Activated CD8-positive, alpha-beta memory T cell treated with anti-CD3 and anti-CD28 coated beads, Interleukin-2, amount 10 ng/mL, durations not matched to agents 7 days and 5 days (primary cell): ENCODE measurements at regions of chr17 and their contacts with region 1.

Region 1: GRCh38 chr17:63611354-63611753 is 10.7 kb downstream of the TACO1 start:
- DNase-seq: peak; percentile 50
- ATAC-seq: peak; percentile 56
- H3K4me3 Mint-ChIP-seq: peak overlapping the region; percentile 8
- H3K27ac Mint-ChIP-seq: peak overlapping the region; percentile 91
- H3K4me1 Mint-ChIP-seq: peaks cover 26% of the 10 kb centered on the region
- H3K27me3 Mint-ChIP-seq: no peaks in the 10 kb centered on the region

Region 2: DNA sequence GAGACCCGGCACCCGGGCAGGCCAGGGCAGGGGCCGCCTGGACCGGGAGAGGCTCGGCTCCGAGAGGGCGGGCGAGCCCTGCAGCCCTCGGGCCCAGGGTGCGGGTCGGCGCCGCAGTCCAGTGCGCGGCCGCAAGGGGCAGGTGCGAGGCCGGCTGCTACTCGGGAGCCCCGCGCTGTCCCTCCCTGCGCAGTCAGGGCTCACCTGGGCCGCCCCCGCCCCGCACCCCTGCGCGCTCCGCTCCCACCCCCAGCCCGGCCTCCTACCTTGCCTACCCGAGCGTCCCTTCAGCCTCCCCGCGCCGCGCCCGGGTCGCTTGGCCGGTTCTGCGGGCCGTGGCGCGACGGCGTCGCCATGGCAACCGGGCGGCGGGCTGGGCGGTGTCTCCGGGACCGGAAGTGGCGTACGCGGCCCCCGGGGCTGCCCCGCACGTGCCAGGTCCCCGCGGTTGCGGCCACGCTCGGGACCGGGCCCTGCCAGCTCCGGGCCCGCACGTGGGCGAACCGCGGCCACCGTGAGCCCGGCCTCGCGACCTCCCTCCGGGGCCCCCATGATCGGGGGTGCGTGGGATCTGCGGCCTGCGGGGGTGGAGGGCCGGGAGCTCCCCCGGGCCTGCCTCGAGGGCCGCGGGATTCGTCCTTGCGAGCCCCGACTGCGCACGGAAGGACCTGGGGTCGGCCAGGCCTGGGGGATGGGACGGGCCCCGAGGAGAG is 165.2 kb before region 1 on chr17 and contains the start of gene CYB561:
- CTCF ChIA-PET with region 1: interaction called, 29 read pairs
- DNase-seq: peak; percentile 70
- ATAC-seq: peak; percentile 76
- H3K4me3 Mint-ChIP-seq: peak within 1 kb of the TSS; percentile 47
- H3K27ac Mint-ChIP-seq: peak within 1 kb of the TSS; percentile 75
- H3K4me1 Mint-ChIP-seq: peaks cover 18% of the 10 kb centered on the region
- H3K27me3 Mint-ChIP-seq: peaks cover 3% of the 10 kb centered on the region
- total RNA-seq, gene CYB561: 2.2 to 13.6 TPM

Region 3: GRCh38 chr17:63549946-63550807 is 61.2 kb before region 1 on chr17 and contains the start of gene DCAF7:
- CTCF ChIA-PET with region 1: interaction called, 15 read pairs
- DNase-seq: peak; percentile 100
- ATAC-seq: peak; percentile 95
- H3K4me3 Mint-ChIP-seq: peak within 1 kb of the TSS; percentile 88
- H3K27ac Mint-ChIP-seq: peak within 1 kb of the TSS; percentile 98
- H3K4me1 Mint-ChIP-seq: peaks cover 33% of the 10 kb centered on the region
- H3K27me3 Mint-ChIP-seq: no peaks in the 10 kb centered on the region
- total RNA-seq, gene DCAF7: 129 to 139 TPM

Region 4: DNA sequence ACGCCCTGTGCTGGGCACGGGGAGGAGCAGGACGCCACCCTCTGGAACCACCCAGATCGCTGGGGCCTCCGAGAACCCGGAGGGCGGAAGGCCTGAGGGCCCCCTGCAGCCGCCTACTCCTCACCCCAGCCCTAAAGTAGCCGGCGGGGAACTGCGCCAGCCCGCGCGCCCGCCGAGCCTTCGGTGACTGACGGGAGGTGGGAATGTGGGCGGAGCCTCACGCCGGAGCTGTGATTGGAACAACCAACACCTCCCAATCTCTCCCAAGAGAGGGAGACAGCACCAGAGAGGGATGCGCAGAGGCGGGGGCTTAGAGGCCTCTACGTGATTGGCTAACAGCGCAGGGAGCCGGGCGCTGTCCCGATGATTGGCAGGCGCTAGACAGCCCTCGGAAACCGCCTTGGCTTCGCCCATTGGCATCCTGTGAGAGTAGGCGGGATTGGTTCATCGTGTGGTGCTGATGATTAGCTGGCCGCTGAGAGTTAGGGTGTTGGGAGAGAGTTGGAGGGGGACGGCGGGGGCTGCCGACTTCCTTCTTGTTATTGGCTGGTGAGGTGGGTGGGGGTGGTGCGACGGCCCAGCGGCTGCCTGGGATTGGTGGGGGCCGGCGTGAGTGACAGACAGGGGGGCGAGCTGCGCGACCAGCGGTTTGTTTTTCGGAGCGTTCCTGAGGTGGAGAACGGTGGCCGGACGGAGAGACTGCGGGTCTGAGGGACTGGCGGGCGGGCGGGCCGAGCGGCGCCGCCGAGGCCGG is 10.6 kb after region 1 on chr17 and contains the start of gene MAP3K3:
- CTCF ChIA-PET with region 1: interaction called, 19 read pairs
- DNase-seq: peak; percentile 99
- ATAC-seq: peak; percentile 91
- H3K4me3 Mint-ChIP-seq: peak within 1 kb of the TSS; percentile 97
- H3K27ac Mint-ChIP-seq: peak within 1 kb of the TSS; percentile 89
- H3K4me1 Mint-ChIP-seq: peaks cover 29% of the 10 kb centered on the region
- H3K27me3 Mint-ChIP-seq: peaks cover 3% of the 10 kb centered on the region
- total RNA-seq, gene MAP3K3: 29.0 to 36.5 TPM

Region 5: DNA sequence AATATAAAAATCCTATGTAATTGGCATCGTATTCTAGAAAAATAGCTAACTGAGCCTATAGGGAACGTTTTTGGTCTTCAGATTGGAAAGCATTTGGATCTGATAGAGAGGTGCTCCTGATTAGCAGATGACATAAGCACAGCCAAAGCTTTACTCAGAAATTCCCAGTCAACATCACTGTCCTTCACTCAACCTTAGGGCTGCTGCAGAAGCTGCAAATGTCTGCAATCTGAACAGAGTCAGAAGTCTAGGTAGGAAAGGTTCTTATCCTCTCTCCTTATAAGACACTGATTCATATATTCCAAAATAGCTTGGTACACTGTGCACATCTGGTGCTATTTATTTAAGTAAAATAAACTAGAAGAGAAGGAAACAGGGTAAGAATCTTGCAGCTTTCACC is 111.0 kb after region 1 on chr17:
- CTCF ChIA-PET with region 1: no interaction called
- DNase-seq: no peak
- ATAC-seq: no peak
- H3K4me3 Mint-ChIP-seq: no peak overlapping the region
- H3K27ac Mint-ChIP-seq: no peak overlapping the region
- H3K4me1 Mint-ChIP-seq: no peaks in the 10 kb centered on the region
- H3K27me3 Mint-ChIP-seq: no peaks in the 10 kb centered on the region